ENCODE measurements at regions of chr1 and their contacts with region 1.

Region 1: DNA sequence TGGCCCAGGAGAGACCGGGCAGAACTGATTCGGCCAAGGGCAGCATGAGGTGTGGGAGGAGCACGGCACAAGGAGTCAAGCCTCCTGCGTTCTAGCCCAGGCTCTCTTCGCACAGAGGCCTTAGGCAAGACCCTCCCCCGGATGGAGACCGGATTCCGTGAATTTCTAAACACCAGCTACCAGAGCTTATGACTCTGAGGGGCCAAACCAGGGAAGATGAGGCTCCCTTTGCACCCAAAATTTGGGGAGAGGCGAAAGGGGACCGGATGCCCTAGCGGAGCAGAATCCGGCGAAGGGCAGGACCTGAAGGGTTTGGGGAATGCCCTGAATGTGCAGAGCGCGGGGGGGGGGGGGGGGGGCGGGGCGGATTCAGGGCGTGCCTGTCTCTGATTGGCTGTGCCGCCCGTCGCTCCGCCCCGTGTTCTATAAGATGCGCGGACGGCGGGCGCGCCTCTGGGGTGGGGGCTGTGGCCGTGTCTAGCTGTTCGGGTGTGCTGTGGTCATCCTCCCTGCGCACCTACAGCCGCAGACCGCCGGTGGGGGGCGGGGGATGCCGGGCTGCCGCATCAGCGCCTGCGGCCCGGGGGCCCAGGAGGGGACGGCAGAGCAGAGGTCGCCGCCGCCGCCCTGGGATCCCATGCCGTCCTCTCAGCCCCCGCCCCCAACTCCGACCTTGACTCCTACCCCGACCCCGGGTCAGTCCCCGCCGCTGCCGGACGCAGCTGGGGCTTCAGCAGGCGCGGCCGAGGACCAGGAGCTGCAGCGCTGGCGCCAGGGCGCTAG is at the start of gene TRNP1:
- DNase-seq: no peak
- H3K4me3 ChIP-seq: peak within 1 kb of the TSS; percentile 79
- H3K27ac ChIP-seq: peak within 1 kb of the TSS; percentile 43
- H3K27me3 ChIP-seq: no peaks in the 10 kb centered on the region
- CTCF ChIP-seq: no peak
- polyA plus RNA-seq, gene TRNP1: 47.1 and 50.7 TPM in 2 replicates

Region 2: GRCh38 chr1:26853156-26853555 is 140.3 kb before region 1 on chr1:
- CTCF ChIA-PET with region 1: no interaction called
- POLR2A ChIA-PET with region 1: no interaction called
- DNase-seq: no peak
- H3K4me3 ChIP-seq: no peak overlapping the region
- H3K27ac ChIP-seq: no peak overlapping the region
- H3K27me3 ChIP-seq: no peaks in the 10 kb centered on the region
- CTCF ChIP-seq: peak; percentile 89

Region 3: GRCh38 chr1:26923711-26924110 is 69.7 kb before region 1 on chr1:
- CTCF ChIA-PET with region 1: no interaction called
- POLR2A ChIA-PET with region 1: no interaction called
- DNase-seq: no peak
- H3K4me3 ChIP-seq: no peak overlapping the region
- H3K27ac ChIP-seq: no peak overlapping the region
- H3K27me3 ChIP-seq: no peaks in the 10 kb centered on the region
- CTCF ChIP-seq: no peak

Region 4: GRCh38 chr1:26970810-26971209 is 22.6 kb before region 1 on chr1:
- CTCF ChIA-PET with region 1: interaction called, 7 read pairs
- POLR2A ChIA-PET with region 1: interaction called, 17 read pairs
- DNase-seq: no peak
- H3K4me3 ChIP-seq: no peak overlapping the region
- H3K27ac ChIP-seq: no peak overlapping the region
- H3K27me3 ChIP-seq: no peaks in the 10 kb centered on the region
- CTCF ChIP-seq: no peak

Region 5: GRCh38 chr1:27010989-27011764 is 17.7 kb after region 1 on chr1:
- CTCF ChIA-PET with region 1: interaction called, 24 read pairs
- POLR2A ChIA-PET with region 1: interaction called, 15 read pairs
- DNase-seq: no peak
- H3K4me3 ChIP-seq: peak overlapping the region; percentile 23
- H3K27ac ChIP-seq: peak overlapping the region; percentile 52
- H3K27me3 ChIP-seq: no peaks in the 10 kb centered on the region
- CTCF ChIP-seq: no peak

Region 6: GRCh38 chr1:27111626-27112573 is 118.5 kb after region 1 on chr1:
- CTCF ChIA-PET with region 1: no interaction called
- POLR2A ChIA-PET with region 1: no interaction called
- DNase-seq: peak; percentile 99
- H3K4me3 ChIP-seq: no peak overlapping the region
- H3K27ac ChIP-seq: peak overlapping the region; percentile 90
- H3K27me3 ChIP-seq: no peaks in the 10 kb centered on the region
- CTCF ChIP-seq: peak; percentile 38